Activated naive CD4-positive, alpha-beta T cell treated with anti-CD3 and anti-CD28 coated beads, Interleukin-2, amount 10 ng/mL, durations not matched to agents 7 days and 5 days (primary cell): ENCODE measurements at regions of chr9 and their contacts with region 1.

Region 1: GRCh38 chr9:126704873-126705766 is 91.4 kb downstream of the LMX1B start:
- DNase-seq: peak; percentile 91
- H3K4me3 Mint-ChIP-seq: peak overlapping the region; percentile 24
- H3K27ac Mint-ChIP-seq: no peak overlapping the region
- H3K4me1 Mint-ChIP-seq: peaks cover 17% of the 10 kb centered on the region
- H3K27me3 Mint-ChIP-seq: peaks cover 54% of the 10 kb centered on the region

Region 2: GRCh38 chr9:126615175-126615814 is 89.8 kb before region 1 on chr9:
- CTCF ChIA-PET with region 1: no interaction called
- DNase-seq: peak; percentile 70
- H3K4me3 Mint-ChIP-seq: no peak overlapping the region
- H3K27ac Mint-ChIP-seq: peak overlapping the region; percentile 70
- H3K4me1 Mint-ChIP-seq: peaks cover 25% of the 10 kb centered on the region
- H3K27me3 Mint-ChIP-seq: peaks cover 98% of the 10 kb centered on the region

Region 3: DNA sequence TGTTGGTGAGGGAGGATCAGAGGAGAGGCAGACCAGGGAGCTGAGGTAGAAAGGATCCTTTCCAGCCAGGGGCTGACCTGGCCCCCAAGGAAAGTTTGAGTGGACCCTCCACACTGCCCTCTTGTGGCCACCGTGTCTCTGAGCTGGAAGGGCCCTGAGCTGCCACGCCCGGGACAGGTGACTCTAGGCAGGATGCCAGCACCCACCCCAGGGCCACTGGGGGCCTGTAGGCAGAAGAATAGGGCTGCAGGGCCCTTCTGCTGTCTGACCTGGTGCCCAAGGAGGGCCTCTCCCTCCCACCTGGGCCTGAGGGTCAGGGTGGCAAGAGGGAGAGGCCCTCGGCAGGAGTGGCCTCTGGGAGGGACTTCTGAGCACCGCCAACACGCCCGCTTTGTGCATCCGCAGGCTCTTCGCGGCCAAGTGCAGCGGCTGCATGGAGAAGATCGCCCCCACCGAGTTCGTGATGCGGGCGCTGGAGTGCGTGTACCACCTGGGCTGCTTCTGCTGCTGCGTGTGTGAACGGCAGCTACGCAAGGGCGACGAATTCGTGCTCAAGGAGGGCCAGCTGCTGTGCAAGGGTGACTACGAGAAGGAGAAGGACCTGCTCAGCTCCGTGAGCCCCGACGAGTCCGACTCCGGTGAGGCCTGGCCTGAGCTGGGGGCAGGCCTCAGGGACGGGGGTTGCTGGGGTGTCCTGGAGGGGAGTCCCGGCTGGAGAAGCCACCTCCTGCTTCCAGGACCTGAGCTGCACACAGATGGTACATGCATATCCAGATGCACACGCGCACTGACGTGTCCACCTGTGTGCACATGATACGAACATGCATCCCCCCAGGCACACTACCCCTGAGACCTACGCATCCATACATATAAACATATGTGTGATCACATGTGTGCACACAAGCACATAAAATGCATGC is 14.4 kb before region 1 on chr9:
- CTCF ChIA-PET with region 1: interaction called, 55 read pairs
- DNase-seq: peak; percentile 71
- H3K4me3 Mint-ChIP-seq: no peak overlapping the region
- H3K27ac Mint-ChIP-seq: no peak overlapping the region
- H3K4me1 Mint-ChIP-seq: no peaks in the 10 kb centered on the region
- H3K27me3 Mint-ChIP-seq: peaks cover 54% of the 10 kb centered on the region

Region 4: GRCh38 chr9:126745574-126746411 is 40.7 kb after region 1 on chr9:
- CTCF ChIA-PET with region 1: interaction called, 19 read pairs
- DNase-seq: peak; percentile 38
- H3K4me3 Mint-ChIP-seq: no peak overlapping the region
- H3K27ac Mint-ChIP-seq: peak overlapping the region; percentile 2
- H3K4me1 Mint-ChIP-seq: peaks cover 42% of the 10 kb centered on the region
- H3K27me3 Mint-ChIP-seq: peaks cover 7% of the 10 kb centered on the region

Region 5: DNA sequence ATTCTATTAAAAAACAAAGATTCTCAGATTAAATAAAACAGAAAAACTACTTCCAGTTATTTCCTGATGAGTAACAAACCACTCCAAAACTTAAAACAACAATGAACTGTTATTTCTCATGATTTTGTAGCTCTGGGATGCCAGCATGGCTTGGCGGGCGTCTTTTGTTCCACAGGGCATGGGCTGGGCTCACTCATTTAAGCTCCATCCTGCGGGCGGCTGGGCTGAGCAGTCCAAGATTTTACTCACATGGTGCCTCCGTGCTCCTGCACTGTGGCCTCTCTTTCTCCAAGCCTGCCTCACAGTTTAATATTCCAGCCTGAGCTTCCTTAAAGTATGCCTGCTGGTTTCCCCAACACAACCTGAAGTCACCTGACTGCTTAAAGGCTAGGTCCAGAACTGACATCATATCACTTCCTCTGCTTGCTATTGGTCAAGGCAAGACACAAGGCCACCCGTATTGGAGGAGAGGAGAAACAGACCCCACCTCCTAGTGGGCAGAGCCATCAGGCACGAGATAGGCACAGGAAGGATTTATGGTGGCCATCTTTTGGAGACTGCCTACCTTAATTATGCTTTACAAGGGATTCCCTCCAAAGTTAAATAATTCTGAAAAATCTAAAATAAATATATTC is 58.1 kb after region 1 on chr9:
- CTCF ChIA-PET with region 1: interaction called, 36 read pairs
- DNase-seq: no peak
- H3K4me3 Mint-ChIP-seq: no peak overlapping the region
- H3K27ac Mint-ChIP-seq: no peak overlapping the region
- H3K4me1 Mint-ChIP-seq: no peaks in the 10 kb centered on the region
- H3K27me3 Mint-ChIP-seq: peaks cover 11% of the 10 kb centered on the region

Region 6: GRCh38 chr9:126781186-126782052 is 76.3 kb after region 1 on chr9:
- CTCF ChIA-PET with region 1: interaction called, 481 read pairs
- DNase-seq: peak; percentile 88
- H3K4me3 Mint-ChIP-seq: no peak overlapping the region
- H3K27ac Mint-ChIP-seq: no peak overlapping the region
- H3K4me1 Mint-ChIP-seq: peaks cover 4% of the 10 kb centered on the region
- H3K27me3 Mint-ChIP-seq: peaks cover 61% of the 10 kb centered on the region

Region 7: GRCh38 chr9:127525401-127526187 is 820.5 kb after region 1 on chr9:
- CTCF ChIA-PET with region 1: no interaction called
- DNase-seq: peak; percentile 46
- H3K4me3 Mint-ChIP-seq: no peak overlapping the region
- H3K27ac Mint-ChIP-seq: no peak overlapping the region
- H3K4me1 Mint-ChIP-seq: peaks cover 4% of the 10 kb centered on the region
- H3K27me3 Mint-ChIP-seq: no peaks in the 10 kb centered on the region